Lower leg skin (tissue), 4 donors: ENCODE measurements at regions of chr16 and their contacts with region 1.

Region 1: DNA sequence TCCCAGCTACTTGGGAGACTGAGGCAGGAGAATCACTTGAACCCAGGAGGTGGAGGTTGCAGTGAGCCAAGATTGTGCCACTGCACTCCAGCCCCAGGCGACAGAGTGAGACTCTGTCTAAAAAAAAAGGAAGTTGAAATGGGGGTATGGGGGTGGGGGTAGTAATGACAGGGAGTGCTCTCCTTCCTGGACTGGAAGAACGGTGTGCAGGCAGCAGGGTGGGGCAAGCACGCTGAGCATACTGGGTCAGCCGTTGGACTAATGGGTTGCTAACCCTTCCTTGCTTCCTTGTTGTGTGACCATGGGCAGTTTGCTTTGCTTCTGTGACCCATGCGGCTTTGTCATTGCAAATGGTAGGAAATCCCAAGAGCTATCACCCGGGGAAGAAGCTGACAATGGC is 16.5 kb downstream of the KATNIP start:
- DNase-seq: no peak
- H3K4me3 ChIP-seq: no peak overlapping the region
- CTCF ChIP-seq: no peak
- POLR2A ChIP-seq: no peak

Region 2: DNA sequence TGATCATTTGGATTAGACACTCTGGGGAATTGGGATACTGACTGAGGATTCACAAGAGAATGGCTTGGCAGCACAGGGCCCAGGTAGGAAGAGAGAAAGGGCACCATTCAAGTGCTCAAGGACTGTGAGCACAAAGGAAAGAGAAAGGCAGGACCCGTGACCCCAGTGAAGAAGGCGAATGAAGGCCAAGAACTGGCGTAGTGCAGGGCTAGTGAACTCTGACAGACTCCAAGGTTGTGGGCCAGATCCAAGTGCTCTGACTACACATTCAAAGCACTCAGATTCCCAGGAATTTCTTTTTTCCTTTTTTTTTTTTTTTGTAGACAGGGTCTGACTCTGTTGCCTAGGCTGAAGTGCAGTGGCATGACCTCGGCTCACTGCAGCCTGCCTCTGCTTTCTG is 21.7 kb before region 1 on chr16:
- intact Hi-C with region 1: loop called (anchors 1 kb)
- DNase-seq: no peak
- H3K4me3 ChIP-seq: no peak overlapping the region
- CTCF ChIP-seq: no peak
- POLR2A ChIP-seq: no peak

Region 3: GRCh38 chr16:28014851-28015250 is 448.4 kb after region 1 on chr16:
- intact Hi-C with region 1: no loop called
- DNase-seq: no peak
- H3K4me3 ChIP-seq: no peak overlapping the region
- CTCF ChIP-seq: no peak
- POLR2A ChIP-seq: no peak